ENCODE measurements at regions of chr5 and their contacts with region 1.

Region 1: DNA sequence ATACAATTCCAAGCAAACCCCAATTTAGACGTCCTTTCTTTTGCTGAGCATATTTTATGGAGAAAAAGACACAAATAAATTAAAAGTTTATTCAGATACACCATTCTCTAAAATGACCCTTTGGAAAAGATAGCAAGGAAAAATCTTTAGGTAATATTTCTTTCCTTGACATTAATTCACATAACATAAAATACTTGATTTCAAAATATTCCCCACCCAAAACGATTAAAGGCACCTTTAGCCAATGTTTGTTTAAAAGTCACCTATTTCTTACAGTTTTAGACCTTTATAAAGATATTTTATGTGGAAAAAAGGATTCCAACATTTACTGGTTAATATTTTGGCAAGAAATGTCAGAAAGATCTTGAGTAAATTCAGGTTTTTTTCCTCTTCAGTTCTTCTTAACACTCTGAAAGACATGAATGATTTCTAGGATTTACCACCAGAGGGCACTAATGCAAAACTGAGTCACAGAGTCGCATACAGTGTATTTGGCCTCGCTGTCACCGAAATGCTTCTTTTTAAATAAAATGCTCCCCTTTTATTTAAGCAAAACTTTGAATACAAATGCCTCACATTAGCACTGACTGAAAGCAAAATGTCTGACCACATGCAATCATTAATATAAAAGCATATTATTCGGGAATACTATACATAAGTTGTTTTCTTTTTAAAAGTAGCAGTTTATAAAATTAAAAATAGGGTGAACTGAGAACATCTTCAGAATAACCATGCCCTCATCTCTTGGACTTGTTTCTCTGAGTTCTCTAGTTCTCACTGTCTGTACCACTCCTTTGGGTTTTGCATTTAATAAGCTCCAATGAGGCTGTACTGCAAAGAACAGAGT is 122.5 kb downstream of the SLC1A3 start:
- DNase-seq: no peak
- H3K4me3 Mint-ChIP-seq: no peak overlapping the region
- H3K27ac Mint-ChIP-seq: no peak overlapping the region
- H3K4me1 Mint-ChIP-seq: peaks cover 19% of the 10 kb centered on the region
- H3K27me3 Mint-ChIP-seq: peaks cover 7% of the 10 kb centered on the region

Region 2: GRCh38 chr5:36870399-36871040 is 141.6 kb after region 1 on chr5:
- intact Hi-C with region 1: loop called (anchors 1 kb)
- DNase-seq: no peak
- H3K4me3 Mint-ChIP-seq: no peak overlapping the region
- H3K27ac Mint-ChIP-seq: no peak overlapping the region
- H3K4me1 Mint-ChIP-seq: peaks cover 41% of the 10 kb centered on the region
- H3K27me3 Mint-ChIP-seq: peaks cover 3% of the 10 kb centered on the region

Region 3: DNA sequence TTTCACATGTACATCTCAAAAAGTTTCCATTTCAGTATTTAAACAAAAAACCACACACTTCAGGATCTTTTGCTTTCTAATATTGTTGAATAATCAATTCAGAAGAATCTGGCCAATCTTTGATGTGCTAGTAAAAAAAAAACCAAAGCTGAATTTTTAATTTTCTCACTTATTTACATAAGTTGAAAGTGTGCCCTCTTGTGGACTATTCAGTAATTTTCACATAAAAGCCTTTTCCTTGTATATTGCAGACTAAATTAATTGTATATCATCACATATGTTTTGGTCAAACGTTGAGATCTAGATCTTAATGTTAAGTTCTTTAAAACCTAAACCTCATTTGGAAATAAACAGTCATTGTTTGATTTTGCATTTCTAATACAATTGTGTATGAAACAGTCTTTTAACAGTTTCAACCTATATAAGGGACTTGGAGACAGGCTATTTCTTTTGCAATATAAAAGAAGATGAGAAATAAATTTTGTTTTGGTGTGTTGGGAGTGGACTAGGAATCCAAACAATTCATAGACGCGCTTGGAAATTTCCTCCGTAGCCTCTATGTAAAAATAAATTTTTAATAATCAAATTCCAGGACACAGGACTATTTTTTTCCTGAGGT is 215.8 kb after region 1 on chr5:
- intact Hi-C with region 1: loop called (anchors 2 kb)
- DNase-seq: no peak
- H3K4me3 Mint-ChIP-seq: no peak overlapping the region
- H3K27ac Mint-ChIP-seq: no peak overlapping the region
- H3K4me1 Mint-ChIP-seq: peaks cover 5% of the 10 kb centered on the region
- H3K27me3 Mint-ChIP-seq: no peaks in the 10 kb centered on the region

Region 4: GRCh38 chr5:37005946-37006540 is 277.1 kb after region 1 on chr5:
- intact Hi-C with region 1: loop called (anchors 1 kb)
- DNase-seq: no peak
- H3K4me3 Mint-ChIP-seq: no peak overlapping the region
- H3K27ac Mint-ChIP-seq: no peak overlapping the region
- H3K4me1 Mint-ChIP-seq: no peaks in the 10 kb centered on the region
- H3K27me3 Mint-ChIP-seq: no peaks in the 10 kb centered on the region